ENCODE measurements at regions of chr19 and their contacts with region 1.

Region 1: DNA sequence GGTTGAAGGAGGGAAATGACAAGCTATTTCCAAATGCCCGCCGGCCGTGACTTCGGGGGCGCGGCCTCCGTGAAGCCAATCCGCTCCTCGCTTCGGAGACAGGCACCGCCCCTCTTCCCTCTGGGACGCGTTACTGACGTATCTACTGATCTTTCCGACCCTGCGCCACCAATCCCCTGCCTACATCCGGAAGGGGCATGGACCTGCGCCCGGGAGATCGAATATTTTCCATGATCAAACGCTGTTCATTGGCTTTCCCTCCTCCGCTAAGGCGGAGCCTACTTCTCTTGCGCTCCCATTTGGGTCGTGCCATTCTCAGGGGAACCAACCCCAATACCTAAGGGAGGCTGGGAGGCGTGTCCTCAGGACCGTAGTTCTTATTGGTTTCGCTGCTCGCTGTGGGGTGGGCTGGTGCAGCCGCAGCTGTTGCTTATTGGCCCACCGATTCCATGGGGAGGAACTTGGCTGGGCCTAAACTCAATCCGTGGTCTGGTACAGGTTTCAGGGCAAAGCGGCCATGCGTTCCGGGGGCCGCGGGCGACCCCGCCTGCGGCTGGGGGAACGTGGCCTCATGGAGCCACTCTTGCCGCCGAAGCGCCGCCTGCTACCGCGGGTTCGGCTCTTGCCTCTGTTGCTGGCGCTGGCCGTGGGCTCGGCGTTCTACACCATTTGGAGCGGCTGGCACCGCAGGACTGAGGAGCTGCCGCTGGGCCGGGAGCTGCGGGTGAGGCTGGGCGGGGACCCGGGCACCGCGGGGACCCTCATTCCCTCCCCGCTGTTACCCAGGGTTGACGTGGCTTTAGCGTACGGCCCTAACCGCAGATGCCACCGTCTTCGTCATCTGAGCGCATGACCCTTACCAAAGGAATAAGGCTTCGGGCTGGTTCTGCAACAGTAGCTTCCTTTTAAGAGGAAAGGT is at the start of gene QPCTL:
- DNase-seq: peak; percentile 99
- ATAC-seq: peak; percentile 92
- H3K4me3 Mint-ChIP-seq: peak within 1 kb of the TSS; percentile 89
- H3K27ac Mint-ChIP-seq: peak within 1 kb of the TSS; percentile 97
- H3K4me1 Mint-ChIP-seq: peaks cover 21% of the 10 kb centered on the region
- H3K27me3 Mint-ChIP-seq: no peaks in the 10 kb centered on the region
- total RNA-seq, gene QPCTL: 17.3 to 18.7 TPM

Region 2: GRCh38 chr19:45455707-45456499 is 236.5 kb before region 1 on chr19:
- CTCF ChIA-PET with region 1: no interaction called
- POLR2A ChIA-PET with region 1: no interaction called
- intact Hi-C with region 1: loop called in 1 of 2 experiments (anchors 5 kb)
- DNase-seq: peak; percentile 84
- ATAC-seq: peak; percentile 82
- H3K4me3 Mint-ChIP-seq: peak overlapping the region; percentile 5
- H3K27ac Mint-ChIP-seq: peak overlapping the region; percentile 65
- H3K4me1 Mint-ChIP-seq: peaks cover 23% of the 10 kb centered on the region
- H3K27me3 Mint-ChIP-seq: no peaks in the 10 kb centered on the region

Region 3: GRCh38 chr19:45506246-45506990 is 186.0 kb before region 1 on chr19:
- CTCF ChIA-PET with region 1: interaction called, 4 read pairs
- POLR2A ChIA-PET with region 1: no interaction called
- intact Hi-C with region 1: loop called in 1 of 2 experiments (anchors 1 kb)
- DNase-seq: peak; percentile 100
- ATAC-seq: peak; percentile 80
- H3K4me3 Mint-ChIP-seq: peak overlapping the region; percentile 85
- H3K27ac Mint-ChIP-seq: peak overlapping the region; percentile 96
- H3K4me1 Mint-ChIP-seq: peaks cover 38% of the 10 kb centered on the region
- H3K27me3 Mint-ChIP-seq: no peaks in the 10 kb centered on the region

Region 4: GRCh38 chr19:45681391-45682015 is 10.9 kb before region 1 on chr19:
- CTCF ChIA-PET with region 1: interaction called, 20 read pairs
- POLR2A ChIA-PET with region 1: interaction called, 8 read pairs
- intact Hi-C with region 1: loop called in 1 of 2 experiments (anchors 1 kb)
- DNase-seq: peak; percentile 92
- ATAC-seq: peak; percentile 84
- H3K4me3 Mint-ChIP-seq: peak overlapping the region; percentile 64
- H3K27ac Mint-ChIP-seq: peak overlapping the region; percentile 77
- H3K4me1 Mint-ChIP-seq: peaks cover 19% of the 10 kb centered on the region
- H3K27me3 Mint-ChIP-seq: no peaks in the 10 kb centered on the region

Region 5: GRCh38 chr19:45792470-45793177 is 100.2 kb after region 1 on chr19 and contains the start of gene DMWD:
- CTCF ChIA-PET with region 1: no interaction called
- POLR2A ChIA-PET with region 1: interaction called, 5 read pairs
- intact Hi-C with region 1: loop called in 1 of 2 experiments (anchors 1 kb)
- DNase-seq: peak; percentile 100
- ATAC-seq: peak; percentile 93
- H3K4me3 Mint-ChIP-seq: peak within 1 kb of the TSS; percentile 95
- H3K27ac Mint-ChIP-seq: peak within 1 kb of the TSS; percentile 75
- H3K4me1 Mint-ChIP-seq: peaks cover 30% of the 10 kb centered on the region
- H3K27me3 Mint-ChIP-seq: peaks cover 16% of the 10 kb centered on the region
- total RNA-seq, gene DMWD: 31.1 to 35.1 TPM

Region 6: GRCh38 chr19:47047763-47048405 is 1355.4 kb after region 1 on chr19:
- CTCF ChIA-PET with region 1: no interaction called
- POLR2A ChIA-PET with region 1: no interaction called
- intact Hi-C with region 1: loop called in 1 of 2 experiments (anchors 5 kb)
- DNase-seq: peak; percentile 92
- ATAC-seq: peak; percentile 73
- H3K4me3 Mint-ChIP-seq: peak overlapping the region; percentile 90
- H3K27ac Mint-ChIP-seq: peak overlapping the region; percentile 86
- H3K4me1 Mint-ChIP-seq: peaks cover 8% of the 10 kb centered on the region
- H3K27me3 Mint-ChIP-seq: no peaks in the 10 kb centered on the region

Measured in activated CD4-positive, alpha-beta T cell treated with anti-CD3 and anti-CD28 coated beads for 36 hours (primary cell).